ENCODE measurements at regions of chr10 and their contacts with region 1.

Region 1: DNA sequence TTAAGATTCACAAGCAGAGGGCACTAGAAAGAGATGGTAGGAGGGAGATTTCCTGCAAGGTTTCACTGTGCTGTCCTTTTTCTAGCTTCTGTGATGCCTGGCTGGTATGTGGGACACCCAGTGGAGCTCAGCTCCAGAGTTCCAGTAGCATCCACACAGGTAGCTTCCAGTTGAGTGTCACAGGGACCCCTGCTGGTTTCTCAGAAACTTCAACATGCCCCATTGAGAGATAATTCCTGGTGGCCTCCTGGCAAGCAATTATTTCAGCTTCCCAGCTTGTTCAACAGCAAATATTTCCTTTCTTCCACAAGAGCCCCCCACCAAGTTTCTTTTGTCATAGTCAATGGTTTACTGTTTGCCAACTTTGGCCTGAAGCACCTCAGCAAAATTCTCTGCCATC is 858.7 kb downstream of the REEP3 start:
- DNase-seq: peak; percentile 48
- H3K4me3 Mint-ChIP-seq: no peak overlapping the region
- H3K27ac Mint-ChIP-seq: no peak overlapping the region
- H3K4me1 Mint-ChIP-seq: peaks cover 9% of the 10 kb centered on the region
- H3K27me3 Mint-ChIP-seq: no peaks in the 10 kb centered on the region
- CTCF ChIP-seq: peak; percentile 26

Region 2: GRCh38 chr10:64041185-64041988 is 338.5 kb before region 1 on chr10:
- CTCF ChIA-PET with region 1: interaction called, 7 read pairs
- intact Hi-C with region 1: loop called (anchors 10 kb)
- DNase-seq: peak; percentile 80
- H3K4me3 Mint-ChIP-seq: peak overlapping the region; percentile 53
- H3K27ac Mint-ChIP-seq: no peak overlapping the region
- H3K4me1 Mint-ChIP-seq: peaks cover 8% of the 10 kb centered on the region
- H3K27me3 Mint-ChIP-seq: peaks cover 3% of the 10 kb centered on the region
- CTCF ChIP-seq: peak; percentile 99

Region 3: DNA sequence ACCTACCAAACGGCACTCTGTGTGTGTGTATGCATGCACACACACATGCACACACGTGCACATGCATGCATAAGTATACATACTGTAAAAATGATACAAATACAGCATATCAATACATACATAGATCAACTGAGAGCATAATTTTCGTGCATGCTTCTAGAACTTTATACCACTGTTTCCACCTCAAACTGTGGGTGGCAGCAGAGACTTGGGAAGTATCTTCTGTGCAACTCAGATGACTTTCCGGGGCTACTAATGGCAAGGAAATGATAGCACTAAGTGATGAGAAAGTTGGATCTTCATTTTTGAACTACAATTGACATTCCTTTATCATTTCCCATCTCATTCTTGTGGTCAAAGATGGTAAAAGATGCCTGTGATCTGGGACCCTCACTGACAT is 288.0 kb before region 1 on chr10:
- CTCF ChIA-PET with region 1: no interaction called
- intact Hi-C with region 1: loop called (anchors 1 kb)
- DNase-seq: peak; percentile 41
- H3K4me3 Mint-ChIP-seq: no peak overlapping the region
- H3K27ac Mint-ChIP-seq: no peak overlapping the region
- H3K4me1 Mint-ChIP-seq: peaks cover 8% of the 10 kb centered on the region
- H3K27me3 Mint-ChIP-seq: no peaks in the 10 kb centered on the region
- CTCF ChIP-seq: peak; percentile 48

Region 4: DNA sequence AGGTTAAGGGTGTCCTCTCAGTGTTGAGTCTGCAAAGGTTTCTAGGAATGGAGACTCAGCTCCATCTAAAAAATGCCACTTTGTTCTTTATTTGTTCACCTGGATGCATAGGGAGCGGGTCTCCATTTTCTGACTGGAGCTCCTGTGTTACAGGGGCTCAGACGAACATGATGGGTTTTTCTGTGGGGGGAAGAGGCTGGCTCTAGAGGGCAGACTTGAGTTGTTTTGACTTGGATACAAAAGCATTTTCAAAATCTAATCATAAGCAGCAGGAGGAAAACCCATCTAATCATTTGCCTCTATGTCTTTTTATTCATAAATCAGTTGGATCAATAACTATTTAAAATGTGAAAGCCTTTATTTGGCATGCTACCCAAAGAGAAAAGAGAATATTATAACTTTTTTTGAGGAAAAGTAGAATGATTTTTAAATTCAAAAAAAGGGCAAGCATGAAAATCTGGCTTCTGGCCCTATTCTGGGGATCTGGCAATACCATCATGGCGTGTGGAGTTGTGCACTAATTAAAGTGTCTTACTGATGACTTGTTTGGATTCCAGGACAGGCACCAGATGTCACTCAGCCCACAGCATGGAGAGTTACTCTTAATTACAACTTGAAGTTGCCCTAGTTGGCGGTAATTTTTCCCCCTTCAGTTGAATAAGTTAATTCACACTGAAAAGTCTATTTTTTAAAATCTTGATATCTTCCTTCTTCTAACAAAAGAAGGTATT is 263.8 kb before region 1 on chr10:
- CTCF ChIA-PET with region 1: interaction called, 3 read pairs
- intact Hi-C with region 1: loop called (anchors 2 kb)
- DNase-seq: peak; percentile 54
- H3K4me3 Mint-ChIP-seq: no peak overlapping the region
- H3K27ac Mint-ChIP-seq: no peak overlapping the region
- H3K4me1 Mint-ChIP-seq: peaks cover 26% of the 10 kb centered on the region
- H3K27me3 Mint-ChIP-seq: no peaks in the 10 kb centered on the region
- CTCF ChIP-seq: peak; percentile 40

Region 5: DNA sequence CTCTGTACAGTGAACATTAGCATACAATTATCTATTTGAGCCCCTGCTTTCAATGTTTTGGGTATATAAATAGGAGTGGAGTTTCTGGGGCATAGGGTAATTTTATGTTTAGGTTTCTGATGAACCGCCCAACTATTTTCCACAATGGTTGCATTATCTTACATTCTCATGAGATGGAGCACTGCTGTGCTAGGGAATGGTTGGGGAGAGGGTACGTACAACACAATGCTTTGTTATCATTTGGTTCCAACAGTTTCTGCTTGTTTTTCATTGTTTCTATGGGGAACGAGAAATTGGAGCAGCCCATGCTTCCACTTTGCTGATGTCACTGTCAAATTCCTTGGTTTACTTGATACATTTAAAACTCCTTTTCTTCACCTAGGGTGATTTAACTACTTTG is 256.6 kb after region 1 on chr10:
- CTCF ChIA-PET with region 1: no interaction called
- intact Hi-C with region 1: no loop called
- DNase-seq: no peak
- H3K4me3 Mint-ChIP-seq: no peak overlapping the region
- H3K27ac Mint-ChIP-seq: no peak overlapping the region
- H3K4me1 Mint-ChIP-seq: peaks cover 1% of the 10 kb centered on the region
- H3K27me3 Mint-ChIP-seq: no peaks in the 10 kb centered on the region
- CTCF ChIP-seq: no peak